ENCODE measurements at regions of chr2 and their contacts with region 1.

Region 1: GRCh38 chr2:171587567-171587966 is 65.3 kb downstream of the CYBRD1 start:
- DNase-seq: no peak
- H3K4me3 ChIP-seq: no peak overlapping the region
- H3K27ac ChIP-seq: no peak overlapping the region
- H3K4me1 ChIP-seq: no peaks in the 10 kb centered on the region
- H3K27me3 ChIP-seq: no peaks in the 10 kb centered on the region
- CTCF ChIP-seq: no peak
- EP300 ChIP-seq: no peak
- RAD21 ChIP-seq: no peak

Region 2: DNA sequence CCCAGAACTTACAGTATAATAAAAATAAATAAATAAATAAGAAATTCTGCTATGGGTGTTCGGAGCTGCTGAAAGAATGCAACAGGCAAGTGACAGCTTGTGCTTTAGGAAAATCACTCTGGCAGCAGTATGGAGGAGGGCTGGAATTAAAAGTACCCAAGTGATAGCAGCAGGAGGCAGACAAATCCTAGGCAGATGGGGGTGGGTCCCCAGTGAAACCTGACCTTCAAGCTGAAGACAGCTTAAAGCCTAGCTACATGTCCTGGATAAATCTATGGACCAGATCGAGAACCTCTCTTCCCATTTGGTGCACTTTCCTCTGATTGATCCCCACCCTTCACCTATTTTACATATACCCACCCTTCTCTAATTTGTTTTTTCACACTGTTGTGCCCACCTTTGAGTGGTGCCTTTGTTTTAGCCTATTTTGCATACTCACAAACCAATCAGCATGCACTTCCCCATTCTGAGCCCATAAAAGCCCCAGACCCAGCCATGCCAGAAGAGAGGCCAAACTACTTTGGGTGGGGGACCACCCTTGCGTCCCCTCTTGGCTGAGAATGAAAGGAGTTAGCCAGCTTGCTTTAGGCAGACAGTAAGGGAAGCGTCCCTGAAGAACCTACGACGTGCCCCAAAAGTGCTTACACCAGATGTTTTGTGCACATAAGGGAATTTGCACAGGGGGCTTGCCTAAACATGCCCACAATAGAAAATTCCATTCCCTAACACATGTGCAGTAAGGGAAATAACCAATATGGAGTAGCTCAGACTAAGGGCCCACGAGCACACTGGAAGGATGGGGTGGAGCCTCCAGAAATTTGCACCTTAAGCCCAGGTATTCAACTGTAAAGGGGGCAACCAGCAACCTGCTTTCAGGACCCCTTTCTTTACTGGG is 156.8 kb before region 1 on chr2:
- CTCF ChIA-PET with region 1: no interaction called
- POLR2A ChIA-PET with region 1: no interaction called
- DNase-seq: no peak
- H3K4me3 ChIP-seq: no peak overlapping the region
- H3K27ac ChIP-seq: no peak overlapping the region
- H3K4me1 ChIP-seq: peaks cover 0 to 10% of the 10 kb centered on the region in 2 experiments; a peak in 2 of 4 replicates
- H3K27me3 ChIP-seq: no peaks in the 10 kb centered on the region
- CTCF ChIP-seq: no peak
- EP300 ChIP-seq: no peak
- RAD21 ChIP-seq: no peak

Region 3: DNA sequence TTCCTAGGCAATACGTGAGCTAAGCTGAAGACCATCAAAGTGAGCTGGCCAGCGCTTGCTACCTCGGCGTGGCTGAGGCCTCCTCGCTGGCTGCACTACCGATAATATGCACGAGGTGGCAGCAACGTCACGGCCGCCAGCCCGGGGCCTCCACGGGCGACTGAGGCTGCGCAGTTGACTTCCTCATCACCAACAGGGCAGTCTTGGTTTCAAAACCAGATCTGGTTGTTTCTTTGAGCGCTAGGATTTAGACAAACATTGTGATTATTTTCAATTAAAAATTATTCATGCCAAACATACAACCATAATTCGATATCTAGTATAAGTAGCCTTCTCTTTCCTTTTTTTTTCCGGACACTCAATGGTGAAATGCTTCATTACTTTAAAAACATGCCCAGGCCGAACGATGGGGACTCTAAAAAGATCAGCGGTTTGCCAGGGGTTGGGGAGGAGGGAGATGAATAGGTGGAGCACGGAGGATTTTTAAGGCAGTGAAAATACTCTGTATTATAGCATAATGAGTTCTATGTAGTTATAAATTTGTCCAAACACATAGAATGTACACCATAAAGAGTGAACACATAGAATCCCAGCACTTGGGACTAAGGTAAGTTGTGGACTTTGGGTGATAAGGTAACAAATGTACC is 13.3 kb before region 1 on chr2:
- CTCF ChIA-PET with region 1: interaction called, 10 read pairs
- POLR2A ChIA-PET with region 1: no interaction called
- DNase-seq: peak; percentile 88
- H3K4me3 ChIP-seq: no peak overlapping the region; a peak in 1 of 4 replicates
- H3K27ac ChIP-seq: no peak overlapping the region
- H3K4me1 ChIP-seq: no peaks in the 10 kb centered on the region
- H3K27me3 ChIP-seq: no peaks in the 10 kb centered on the region
- CTCF ChIP-seq: peak; percentile 95
- EP300 ChIP-seq: no peak
- RAD21 ChIP-seq: peak; percentile 95

Region 4: DNA sequence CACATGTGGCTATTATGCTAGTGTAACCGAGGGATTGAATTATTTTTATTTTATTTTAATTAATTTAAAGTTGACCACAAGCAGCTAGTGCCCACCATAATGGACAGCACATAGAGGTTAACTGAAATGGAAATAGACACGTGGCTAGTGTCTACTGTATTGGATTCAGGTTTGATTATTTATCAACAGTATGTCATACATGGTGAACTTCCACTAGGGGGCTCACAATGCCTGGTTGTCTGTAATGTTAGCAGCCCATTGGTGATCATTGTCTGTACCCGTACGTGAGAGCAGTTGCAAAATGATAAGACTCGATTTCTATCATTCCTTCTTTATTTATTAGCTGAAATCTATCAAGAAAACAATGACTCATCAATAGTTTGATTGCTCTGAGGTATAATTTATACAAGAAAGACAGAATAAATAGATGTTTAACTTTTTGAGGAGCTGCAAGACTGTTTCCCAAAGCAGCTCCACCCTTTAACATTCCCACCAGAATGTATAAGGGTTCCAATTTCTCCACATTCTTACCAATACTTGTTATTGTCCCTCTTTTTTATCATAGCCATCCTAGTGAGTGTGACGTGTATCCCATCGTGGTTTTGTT is 11.2 kb after region 1 on chr2:
- CTCF ChIA-PET with region 1: interaction called, 20 read pairs
- POLR2A ChIA-PET with region 1: no interaction called
- DNase-seq: peak; percentile 74
- H3K4me3 ChIP-seq: 0 out of 4 replicates have a peak overlapping the region, but pooled peaks of 1 of the 2 experiments have one; percentile 16
- H3K27ac ChIP-seq: no peak overlapping the region
- H3K4me1 ChIP-seq: 0 out of 4 replicates have a peak, but pooled peaks cover 0 to 5% of the 10 kb centered on the region in 2 experiments
- H3K27me3 ChIP-seq: no peaks in the 10 kb centered on the region; the same call in 1 of the 2 replicates
- CTCF ChIP-seq: peak; percentile 83
- EP300 ChIP-seq: no peak
- RAD21 ChIP-seq: peak; percentile 78